Posterior vena cava (tissue), 2 donors: ENCODE measurements at regions of chr1 and their contacts with region 1.

Region 1: GRCh38 chr1:33472349-33472980 is at the start of gene ZSCAN20:
- DNase-seq: peak; percentile 99
- total RNA-seq, gene ZSCAN20: 5.1 to 5.7 TPM

Region 2: GRCh38 chr1:33616773-33617172 is 144.3 kb after region 1 on chr1:
- intact Hi-C with region 1: loop called in 1 of 2 experiments (anchors 10 kb)
- DNase-seq: no peak